Sciatic nerve (tissue), 2 donors: ENCODE measurements at regions of chr10 and their contacts with region 1.

Region 1: GRCh38 chr10:29304264-29305030 is 15.6 kb downstream of the LYZL1 start:
- DNase-seq: peak; percentile 76
- ATAC-seq: peak; percentile 92

Region 2: DNA sequence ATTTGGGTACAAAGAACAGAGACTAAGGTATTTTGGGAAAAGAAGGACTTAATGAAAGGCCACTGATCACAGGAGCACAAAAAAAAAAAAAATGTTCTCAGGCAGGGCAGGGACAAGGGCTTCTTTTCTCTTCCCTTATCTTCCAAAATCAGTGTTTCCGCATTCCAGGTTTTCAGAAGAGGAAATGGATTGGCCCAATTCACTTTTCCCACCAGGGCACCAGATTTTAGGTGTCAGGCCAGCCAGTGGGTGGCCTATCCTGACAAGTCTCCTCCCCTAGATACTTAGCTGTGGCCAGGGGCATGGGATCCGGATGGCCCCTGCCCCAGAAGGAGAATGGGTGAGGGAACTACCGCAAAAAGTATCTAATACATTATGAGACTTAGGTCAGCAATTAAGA is 860.4 kb before region 1 on chr10:
- intact Hi-C with region 1: no loop called
- DNase-seq: no peak
- ATAC-seq: no peak

Region 3: DNA sequence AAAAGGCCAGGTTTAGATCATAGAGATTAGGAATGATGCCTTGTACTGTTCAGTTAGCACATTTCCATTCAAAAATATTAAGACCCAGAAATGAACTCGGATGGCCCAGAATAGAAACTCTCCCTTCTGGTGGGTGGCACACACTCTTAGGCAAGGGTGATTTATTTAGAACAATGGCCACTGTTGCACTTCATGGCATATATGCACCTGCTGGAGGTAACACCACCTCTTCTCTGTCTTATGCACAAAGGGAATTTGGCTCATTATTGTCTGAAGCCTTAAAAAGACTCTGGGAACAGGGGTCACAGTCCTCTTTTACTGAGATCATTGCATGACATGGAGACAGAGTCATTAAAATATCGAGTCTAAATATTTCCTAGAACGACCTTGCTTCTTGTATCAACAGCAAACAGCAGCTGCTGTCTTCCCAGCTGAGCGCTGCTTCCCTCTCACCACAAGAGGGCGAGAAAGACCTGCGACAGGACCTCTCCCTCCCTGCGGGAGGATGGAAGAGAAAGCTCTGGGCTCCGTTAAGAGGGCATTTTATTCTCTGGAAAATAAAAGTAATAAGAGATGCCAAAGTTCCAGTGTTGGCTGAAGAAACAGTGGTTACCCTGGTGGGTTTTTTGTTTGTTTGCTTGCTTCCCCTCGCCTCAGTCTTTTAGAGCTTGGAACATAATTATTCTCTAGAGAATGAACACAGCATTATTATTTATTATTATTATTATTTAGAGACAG is 640.7 kb before region 1 on chr10:
- intact Hi-C with region 1: loop called (anchors 5 kb)
- DNase-seq: peak; percentile 90
- ATAC-seq: peak; percentile 94